ENCODE measurements at regions of chr1 and their contacts with region 1.

Region 1: DNA sequence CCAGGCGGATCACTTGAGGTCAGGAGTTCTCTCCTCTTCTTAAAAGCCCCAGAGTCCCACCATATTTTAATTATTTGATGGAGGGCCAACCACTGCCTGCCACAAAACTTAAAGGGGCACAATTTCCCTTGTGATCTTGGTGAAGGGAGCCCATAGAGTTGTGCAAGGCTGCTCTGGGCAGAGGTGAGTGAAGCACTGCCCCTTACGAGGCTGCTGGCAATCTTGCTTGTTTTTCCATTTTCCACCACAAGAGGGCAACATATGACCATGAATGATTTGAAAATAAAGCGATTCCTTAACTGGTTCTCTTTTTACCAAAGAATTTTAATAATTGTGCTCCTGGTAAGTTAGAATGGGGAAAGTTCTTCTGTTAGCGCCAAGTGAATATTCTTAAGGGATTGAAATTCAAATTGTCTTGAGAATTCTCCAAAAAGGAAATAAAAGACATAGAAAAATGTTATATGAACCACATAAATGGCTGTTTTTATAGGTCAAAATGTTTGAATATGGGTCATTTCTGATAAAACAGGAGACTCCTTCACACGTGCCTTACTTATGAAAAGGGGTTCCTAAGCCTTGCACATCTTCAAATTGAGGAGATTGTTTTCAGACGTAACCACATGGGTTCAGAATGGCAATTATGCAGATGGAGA is 22.7 kb downstream of the PGM1 start:
- DNase-seq: peak; percentile 63
- ATAC-seq: peak; percentile 65
- H3K4me3 Mint-ChIP-seq: no peak overlapping the region
- H3K27ac Mint-ChIP-seq: no peak overlapping the region
- H3K4me1 Mint-ChIP-seq: no peaks in the 10 kb centered on the region
- H3K27me3 Mint-ChIP-seq: no peaks in the 10 kb centered on the region

Region 2: GRCh38 chr1:63691701-63692425 is 76.0 kb after region 1 on chr1:
- CTCF ChIA-PET with region 1: interaction called, 6 read pairs
- POLR2A ChIA-PET with region 1: no interaction called
- intact Hi-C with region 1: loop called in 1 of 2 experiments (anchors 2 kb)
- DNase-seq: peak; percentile 52
- ATAC-seq: peak; percentile 60
- H3K4me3 Mint-ChIP-seq: no peak overlapping the region
- H3K27ac Mint-ChIP-seq: no peak overlapping the region
- H3K4me1 Mint-ChIP-seq: no peaks in the 10 kb centered on the region
- H3K27me3 Mint-ChIP-seq: no peaks in the 10 kb centered on the region

Region 3: DNA sequence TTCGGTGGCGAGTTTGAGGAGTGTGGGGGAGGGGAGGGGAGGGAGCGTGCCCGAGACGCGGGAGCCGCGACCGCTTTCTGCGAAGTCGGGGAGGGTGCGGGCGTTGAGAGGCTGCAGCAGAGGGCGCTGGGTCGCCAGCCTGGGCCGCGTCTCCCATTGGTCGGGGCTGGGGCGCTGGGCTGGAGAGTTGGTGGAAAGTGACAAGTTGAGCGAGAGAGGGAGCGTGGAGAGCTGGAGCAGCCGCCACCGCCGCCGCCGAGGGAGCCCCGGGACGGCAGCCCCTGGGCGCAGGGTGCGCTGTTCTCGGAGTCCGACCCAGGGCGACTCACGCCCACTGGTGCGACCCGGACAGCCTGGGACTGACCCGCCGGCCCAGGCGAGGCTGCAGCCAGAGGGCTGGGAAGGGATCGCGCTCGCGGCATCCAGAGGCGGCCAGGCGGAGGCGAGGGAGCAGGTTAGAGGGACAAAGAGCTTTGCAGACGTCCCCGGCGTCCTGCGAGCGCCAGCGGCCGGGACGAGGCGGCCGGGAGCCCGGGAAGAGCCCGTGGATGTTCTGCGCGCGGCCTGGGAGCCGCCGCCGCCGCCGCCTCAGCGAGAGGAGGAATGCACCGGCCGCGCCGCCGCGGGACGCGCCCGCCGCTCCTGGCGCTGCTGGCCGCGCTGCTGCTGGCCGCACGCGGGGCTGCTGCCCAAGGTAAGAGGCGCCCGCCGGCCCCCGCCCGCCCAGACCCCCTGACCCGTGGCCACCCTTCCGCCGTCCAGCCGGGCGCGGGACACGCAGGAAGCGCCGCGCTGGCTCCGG is 158.1 kb after region 1 on chr1 and contains the start of gene ROR1:
- CTCF ChIA-PET with region 1: no interaction called
- POLR2A ChIA-PET with region 1: no interaction called
- intact Hi-C with region 1: loop called in 1 of 2 experiments (anchors 5 kb)
- DNase-seq: peak; percentile 85
- ATAC-seq: peak; percentile 98
- H3K4me3 Mint-ChIP-seq: peak within 1 kb of the TSS; percentile 66
- H3K27ac Mint-ChIP-seq: no peak within 1 kb of the TSS
- H3K4me1 Mint-ChIP-seq: peaks cover 13% of the 10 kb centered on the region
- H3K27me3 Mint-ChIP-seq: peaks cover 50% of the 10 kb centered on the region
- total RNA-seq, gene ROR1: 0.21 TPM in 1 of 2 experiments, not detected in the other

Region 4: DNA sequence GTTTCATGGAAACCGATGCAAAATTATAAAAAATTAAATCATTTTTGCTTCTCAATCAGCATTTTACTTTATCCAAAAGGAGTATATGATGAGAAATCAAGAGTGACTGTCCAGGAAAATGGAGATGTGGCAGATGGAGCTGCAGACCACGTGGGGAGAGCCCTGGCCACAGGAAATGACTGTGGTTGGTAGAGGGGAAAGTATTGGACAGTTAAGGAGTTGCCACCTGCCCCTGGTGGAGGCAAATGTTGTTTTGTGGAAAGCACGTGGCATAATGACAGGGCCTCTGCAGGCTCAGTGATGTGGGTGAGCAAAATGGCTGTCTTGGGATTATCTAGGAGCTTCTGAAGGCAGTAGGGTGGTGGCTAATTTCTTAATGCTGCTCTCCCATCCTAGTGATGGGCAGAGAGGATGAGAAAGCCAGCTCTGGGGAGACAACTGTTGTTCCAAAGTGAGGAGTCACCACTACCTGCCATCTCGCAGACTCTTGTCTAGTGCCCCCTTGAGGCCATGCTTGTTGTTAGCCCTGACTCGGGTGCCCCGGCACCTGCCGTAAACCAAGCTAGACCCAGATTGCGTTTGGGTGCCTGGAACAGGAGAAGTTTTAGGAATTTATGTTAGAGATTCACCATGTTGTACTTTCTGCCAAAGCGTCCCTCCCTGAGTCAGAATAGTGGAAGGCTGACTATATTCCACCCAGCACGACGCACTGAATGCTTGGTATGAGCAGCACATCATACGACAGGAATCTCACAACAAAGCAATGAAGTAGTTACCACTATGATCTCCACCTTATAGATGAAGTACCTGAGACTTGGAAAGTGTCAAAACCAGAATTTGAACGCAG is 301.9 kb after region 1 on chr1:
- CTCF ChIA-PET with region 1: no interaction called
- POLR2A ChIA-PET with region 1: no interaction called
- intact Hi-C with region 1: loop called (anchors 5 to 10 kb)
- DNase-seq: peak; percentile 51
- ATAC-seq: no peak
- H3K4me3 Mint-ChIP-seq: no peak overlapping the region
- H3K27ac Mint-ChIP-seq: no peak overlapping the region
- H3K4me1 Mint-ChIP-seq: no peaks in the 10 kb centered on the region
- H3K27me3 Mint-ChIP-seq: peaks cover 2% of the 10 kb centered on the region

Measured in activated CD4-positive, alpha-beta T cell treated with anti-CD3 and anti-CD28 coated beads for 36 hours (primary cell).